GM12878 (cell line): ENCODE measurements at regions of chr22 and their contacts with region 1.

Region 1: DNA sequence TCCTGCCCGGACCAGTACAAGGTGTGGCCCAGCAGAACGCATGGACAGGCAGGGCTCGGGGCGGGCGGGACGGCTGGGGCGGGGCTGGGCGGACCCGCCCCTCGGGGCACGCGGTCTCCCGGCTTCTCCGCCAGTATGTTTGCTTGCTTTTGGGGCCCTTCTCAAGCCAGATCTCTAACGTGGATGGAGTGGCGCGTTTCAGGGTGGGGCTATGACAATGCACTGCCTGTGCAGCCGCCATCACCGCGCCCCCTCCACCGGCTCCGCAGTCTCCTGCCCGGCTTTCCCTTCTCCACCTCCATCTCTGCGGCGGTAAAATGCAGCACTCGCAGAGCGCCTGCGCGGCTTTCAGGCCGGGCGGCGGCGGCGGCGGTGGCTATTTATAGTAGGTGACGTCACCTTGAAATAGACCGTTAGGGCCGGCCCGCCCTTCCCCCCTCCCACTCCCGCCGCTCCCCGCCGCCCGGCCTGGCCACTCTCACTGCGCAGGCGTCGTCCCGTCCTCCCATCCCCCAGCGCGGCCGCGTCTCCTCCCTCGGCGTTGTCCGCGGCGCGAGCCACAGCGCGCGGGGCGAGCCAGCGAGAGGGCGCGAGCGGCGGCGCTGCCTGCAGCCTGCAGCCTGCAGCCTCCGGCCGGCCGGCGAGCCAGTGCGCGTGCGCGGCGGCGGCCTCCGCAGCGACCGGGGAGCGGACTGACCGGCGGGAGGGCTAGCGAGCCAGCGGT is at the start of gene YWHAH:
- DNase-seq: peak; percentile 62
- ATAC-seq: peak; percentile 82
- H3K4me3 ChIP-seq: peak within 1 kb of the TSS; percentile 100
- H3K27ac ChIP-seq: peak within 1 kb of the TSS; percentile 83
- H3K4me1 ChIP-seq: peaks cover 13% of the 10 kb centered on the region
- H3K27me3 ChIP-seq: no peaks in the 10 kb centered on the region
- CTCF ChIP-seq: no peak
- EP300 ChIP-seq: no peak
- POLR2A ChIP-seq: peak; percentile 96
- RAD21 ChIP-seq: no peak
- polyA plus RNA-seq, gene YWHAH: 34.2 to 43.7 TPM

Region 2: DNA sequence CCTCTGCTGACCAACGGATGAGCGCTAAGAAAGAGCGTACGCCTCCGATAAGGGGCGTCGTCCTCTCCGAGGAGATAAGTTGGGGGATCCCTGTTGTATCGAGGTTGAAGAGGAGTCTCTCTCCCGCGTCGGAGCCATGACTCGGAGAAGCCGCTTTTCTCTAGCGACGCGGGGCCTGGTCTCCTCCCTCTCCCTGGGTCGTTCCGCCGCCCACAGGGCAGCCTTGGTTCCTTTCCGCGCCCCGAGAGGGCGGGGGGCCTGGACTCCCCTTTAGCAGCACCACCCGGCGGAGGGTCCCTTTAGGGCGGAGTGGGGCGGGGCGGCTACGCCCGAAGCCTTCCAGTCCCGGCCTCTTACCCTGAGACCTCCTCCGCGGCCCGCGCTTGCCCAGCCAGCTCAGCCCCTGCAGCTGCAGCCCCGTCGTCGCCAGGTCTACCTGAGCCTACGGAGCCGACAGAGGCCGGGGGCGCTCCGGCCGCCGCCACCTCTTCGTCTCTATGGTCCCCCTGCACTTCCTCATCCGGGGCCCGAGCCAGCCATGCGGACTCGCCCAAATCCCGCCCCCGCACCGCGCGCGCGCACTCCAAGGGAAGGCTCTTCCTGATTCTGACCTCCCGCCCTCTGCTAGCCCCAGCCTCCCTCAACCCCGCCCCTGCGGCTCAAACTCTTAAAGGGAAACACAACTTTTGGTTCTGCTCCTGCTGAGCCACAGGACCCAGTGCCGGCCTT is 194.3 kb before region 1 on chr22 and contains the start of gene PRR14L:
- CTCF ChIA-PET with region 1: interaction called, 3 read pairs
- POLR2A ChIA-PET with region 1: no interaction called
- RAD21 ChIA-PET with region 1: interaction called, 3 read pairs
- SMC1A ChIA-PET with region 1: interaction called, 3 read pairs
- in situ Hi-C with region 1: no loop called
- intact Hi-C with region 1: loop called (anchors 2 kb)
- DNase-seq: peak; percentile 86
- ATAC-seq: peak; percentile 78
- H3K4me3 ChIP-seq: peak within 1 kb of the TSS; percentile 92
- H3K27ac ChIP-seq: peak within 1 kb of the TSS; percentile 94
- H3K4me1 ChIP-seq: peaks cover 13% of the 10 kb centered on the region
- H3K27me3 ChIP-seq: no peaks in the 10 kb centered on the region
- CTCF ChIP-seq: peak in 1 of 3 experiments; percentile 18; a peak in 2 of 6 replicates
- EP300 ChIP-seq: peak in 1 of 2 experiments; percentile 88; a peak in 2 of 4 replicates
- POLR2A ChIP-seq: peak; percentile 99
- RAD21 ChIP-seq: no peak
- polyA plus RNA-seq, gene PRR14L: 4.2 to 12.3 TPM

Region 3: GRCh38 chr22:31872209-31872608 is 71.9 kb before region 1 on chr22:
- CTCF ChIA-PET with region 1: interaction called, 12 read pairs
- POLR2A ChIA-PET with region 1: interaction called, 3 read pairs
- RAD21 ChIA-PET with region 1: interaction called, 5 read pairs
- SMC1A ChIA-PET with region 1: interaction called, 14 read pairs
- in situ Hi-C with region 1: no loop called
- intact Hi-C with region 1: no loop called
- DNase-seq: no peak
- ATAC-seq: peak; percentile 52; the same call in 2 of the 3 replicates
- H3K4me3 ChIP-seq: no peak overlapping the region
- H3K27ac ChIP-seq: no peak overlapping the region
- H3K4me1 ChIP-seq: no peaks in the 10 kb centered on the region; the same call in 1 of the 2 replicates
- H3K27me3 ChIP-seq: no peaks in the 10 kb centered on the region
- CTCF ChIP-seq: peak; percentile 8 to 30 (median 13); a peak in 2 of 6 replicates
- EP300 ChIP-seq: no peak
- POLR2A ChIP-seq: no peak
- RAD21 ChIP-seq: peak; percentile 49

Region 4: DNA sequence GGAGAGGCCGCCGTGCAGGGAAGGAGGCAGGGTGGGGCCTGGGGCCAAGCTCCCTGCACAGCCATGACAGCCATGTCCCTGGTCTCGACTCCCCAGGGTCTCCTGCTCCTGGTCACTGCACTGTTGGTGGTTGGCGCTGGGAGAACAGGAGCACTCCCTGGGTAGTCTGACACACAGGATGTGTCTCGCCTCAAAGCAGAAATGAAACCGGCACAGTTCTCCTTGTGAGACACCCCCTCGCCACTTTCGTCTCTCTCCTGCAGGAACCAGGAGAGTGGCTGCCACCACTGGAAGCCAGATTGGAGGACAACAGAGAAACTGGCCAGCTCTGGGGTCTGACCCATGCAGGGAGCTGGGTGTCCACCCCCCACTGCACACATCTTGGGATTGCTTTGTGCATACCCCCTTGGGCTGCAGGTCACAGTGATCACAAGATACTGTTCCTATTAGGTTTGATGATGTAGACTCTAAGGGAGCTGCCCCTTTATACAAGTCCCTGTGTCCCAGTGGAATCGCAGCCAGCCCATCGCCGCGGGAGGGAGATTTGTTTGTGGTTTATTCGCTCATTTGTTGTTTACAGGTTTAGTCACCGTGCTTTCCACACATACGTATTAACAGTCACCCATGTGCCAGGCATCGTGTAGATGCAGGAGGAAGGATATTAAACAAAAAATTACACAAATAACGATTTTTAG is 26.8 kb before region 1 on chr22:
- CTCF ChIA-PET with region 1: interaction called, 6 read pairs
- POLR2A ChIA-PET with region 1: interaction called, 3 read pairs
- RAD21 ChIA-PET with region 1: no interaction called
- SMC1A ChIA-PET with region 1: interaction called, 3 read pairs
- in situ Hi-C with region 1: no loop called
- intact Hi-C with region 1: loop called (anchors 1 kb)
- DNase-seq: peak; percentile 24
- ATAC-seq: peak; percentile 90
- H3K4me3 ChIP-seq: no peak overlapping the region
- H3K27ac ChIP-seq: peak overlapping the region; percentile 55
- H3K4me1 ChIP-seq: peaks cover 15% of the 10 kb centered on the region
- H3K27me3 ChIP-seq: no peaks in the 10 kb centered on the region
- CTCF ChIP-seq: no peak
- EP300 ChIP-seq: peak; percentile 51 to 70; a peak in 2 of 4 replicates
- POLR2A ChIP-seq: no peak
- RAD21 ChIP-seq: no peak

Region 5: DNA sequence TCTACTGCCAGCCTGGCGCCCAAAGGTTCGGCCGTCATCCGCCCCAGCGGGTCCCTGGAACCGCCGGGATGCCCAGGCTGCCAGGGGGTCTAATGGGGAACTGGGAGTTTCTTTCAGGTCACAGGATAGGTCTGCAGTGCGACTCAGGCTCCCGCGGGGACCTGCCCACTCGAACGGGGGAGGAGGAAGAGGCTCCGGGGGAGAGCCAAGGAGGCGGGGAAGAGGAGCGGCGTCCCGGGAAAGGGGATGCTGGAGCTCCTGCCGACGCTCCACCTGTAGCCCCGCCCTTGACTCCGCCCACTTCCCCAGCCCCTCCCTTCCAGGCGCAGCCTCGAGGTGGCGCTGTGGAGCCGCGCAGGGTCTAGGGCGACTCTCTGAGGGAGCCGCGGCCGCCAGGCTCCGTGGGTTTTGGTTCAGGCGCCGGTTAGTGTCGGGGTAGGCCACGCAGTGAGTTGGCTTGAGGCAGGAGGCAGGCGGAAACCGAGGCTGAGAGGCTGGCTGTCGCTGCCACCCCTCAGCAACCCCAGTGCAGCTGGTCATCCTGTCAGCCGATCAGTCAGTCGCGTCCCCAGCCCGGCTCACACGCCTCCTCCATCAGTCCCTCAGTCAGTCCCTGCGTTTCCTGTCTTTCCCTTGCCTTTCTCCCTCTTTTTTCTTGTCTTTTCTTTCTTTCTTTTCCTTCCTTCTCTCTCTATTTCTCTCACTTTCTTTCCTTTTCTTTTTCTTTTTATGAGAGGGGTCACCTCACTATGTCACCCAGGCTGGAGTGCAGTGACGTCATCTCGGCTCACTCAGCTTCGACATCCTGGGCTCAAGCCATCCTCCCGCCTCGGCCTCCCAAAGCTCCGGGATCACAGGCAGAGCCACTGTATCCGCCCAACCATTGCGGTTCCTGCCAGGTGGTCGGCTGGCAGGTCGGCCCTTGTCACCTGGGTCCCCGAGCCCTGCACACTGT is 26.6 kb after region 1 on chr22:
- CTCF ChIA-PET with region 1: interaction called, 25 read pairs
- POLR2A ChIA-PET with region 1: no interaction called
- RAD21 ChIA-PET with region 1: interaction called, 5 read pairs
- SMC1A ChIA-PET with region 1: interaction called, 5 read pairs
- in situ Hi-C with region 1: no loop called
- intact Hi-C with region 1: no loop called
- DNase-seq: peak; percentile 20
- ATAC-seq: peak; percentile 95
- H3K4me3 ChIP-seq: peak overlapping the region; percentile 76; the same call in 1 of the 2 replicates
- H3K27ac ChIP-seq: no peak overlapping the region
- H3K4me1 ChIP-seq: peaks cover 14% of the 10 kb centered on the region
- H3K27me3 ChIP-seq: no peaks in the 10 kb centered on the region
- CTCF ChIP-seq: peak; percentile 84 to 98 (median 92)
- EP300 ChIP-seq: no peak
- POLR2A ChIP-seq: no peak
- RAD21 ChIP-seq: peak; percentile 67

Region 6: DNA sequence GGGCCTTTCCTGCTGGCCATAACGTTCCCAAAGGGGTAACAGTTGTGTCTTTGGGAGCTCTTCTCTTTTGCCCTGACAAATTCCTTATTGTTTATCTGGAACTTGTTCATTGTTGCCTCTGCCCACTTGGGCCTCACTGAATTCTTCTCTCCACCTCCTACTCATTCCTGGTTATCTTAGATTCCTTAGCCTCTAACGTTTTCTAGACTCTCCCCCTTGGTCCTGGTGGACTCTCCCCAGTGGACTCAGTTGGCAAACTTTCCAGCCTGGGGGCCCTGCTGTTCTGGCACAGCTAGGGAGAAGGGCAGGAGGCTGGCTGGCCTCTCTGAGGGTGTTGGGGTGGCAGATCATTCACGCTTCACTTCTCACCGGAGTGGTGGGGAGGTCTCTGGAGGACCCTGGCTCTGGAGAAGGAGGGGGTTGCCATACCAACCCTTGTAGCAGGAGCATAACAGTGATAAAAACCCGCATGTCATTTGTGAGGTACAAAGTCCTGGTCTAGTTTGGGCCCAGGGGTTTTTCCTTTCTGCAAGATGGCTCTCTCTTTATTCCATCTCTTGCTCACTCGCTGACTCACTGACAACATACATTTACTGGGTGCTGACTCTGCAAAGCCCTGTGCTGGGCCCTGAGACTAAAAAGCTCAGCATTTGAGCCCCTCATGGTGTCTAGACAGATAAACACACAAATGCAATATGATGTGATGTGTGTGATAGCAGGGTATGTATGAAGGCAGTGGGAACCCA is 39.9 kb after region 1 on chr22:
- CTCF ChIA-PET with region 1: no interaction called
- POLR2A ChIA-PET with region 1: no interaction called
- RAD21 ChIA-PET with region 1: no interaction called
- SMC1A ChIA-PET with region 1: no interaction called
- in situ Hi-C with region 1: no loop called
- intact Hi-C with region 1: no loop called
- DNase-seq: no peak
- ATAC-seq: no peak
- H3K4me3 ChIP-seq: no peak overlapping the region
- H3K27ac ChIP-seq: no peak overlapping the region
- H3K4me1 ChIP-seq: no peaks in the 10 kb centered on the region
- H3K27me3 ChIP-seq: no peaks in the 10 kb centered on the region
- CTCF ChIP-seq: no peak
- EP300 ChIP-seq: no peak
- POLR2A ChIP-seq: no peak
- RAD21 ChIP-seq: no peak